ENCODE measurements at regions of chr12 and their contacts with region 1.

Region 1: GRCh38 chr12:57554897-57555296 is 5.1 kb downstream of the KIF5A start:
- DNase-seq: no peak
- H3K4me3 ChIP-seq: no peak overlapping the region
- H3K4me3 Mint-ChIP-seq: no peak overlapping the region
- H3K27ac ChIP-seq: no peak overlapping the region
- H3K27ac Mint-ChIP-seq: no peak overlapping the region
- H3K4me1 ChIP-seq: peaks cover 4 to 6% of the 10 kb centered on the region in 2 donors
- H3K4me1 Mint-ChIP-seq: peaks cover 7% of the 10 kb centered on the region
- H3K27me3 ChIP-seq: peaks cover 17 to 21% of the 10 kb centered on the region in 2 donors
- H3K27me3 Mint-ChIP-seq: peaks cover 27 to 36% (median 28%) of the 10 kb centered on the region in 3 donors
- CTCF ChIP-seq: no peak

Region 2: GRCh38 chr12:57360468-57360867 is 194.4 kb before region 1 on chr12:
- intact Hi-C with region 1: loop called in 1 of 2 experiments (anchors 5 kb)
- DNase-seq: no peak
- H3K4me3 ChIP-seq: no peak overlapping the region
- H3K4me3 Mint-ChIP-seq: no peak overlapping the region
- H3K27ac ChIP-seq: no peak overlapping the region
- H3K27ac Mint-ChIP-seq: no peak overlapping the region
- H3K4me1 ChIP-seq: no peaks in the 10 kb centered on the region
- H3K4me1 Mint-ChIP-seq: no peaks in the 10 kb centered on the region
- H3K27me3 ChIP-seq: no peaks in the 10 kb centered on the region
- H3K27me3 Mint-ChIP-seq: no peaks in the 10 kb centered on the region
- CTCF ChIP-seq: no peak